ENCODE measurements at regions of chr3 and their contacts with region 1.

Region 1: GRCh38 chr3:71416876-71417275 is 166.7 kb downstream of the FOXP1 start:
- DNase-seq: peak; percentile 75
- ATAC-seq: peak; percentile 73
- H3K4me3 Mint-ChIP-seq: peak overlapping the region; percentile 58
- H3K27ac Mint-ChIP-seq: peak overlapping the region; percentile 80
- H3K4me1 Mint-ChIP-seq: peaks cover 67% of the 10 kb centered on the region
- H3K27me3 Mint-ChIP-seq: no peaks in the 10 kb centered on the region

Region 2: GRCh38 chr3:70824773-70825172 is 592.1 kb before region 1 on chr3:
- CTCF ChIA-PET with region 1: no interaction called
- POLR2A ChIA-PET with region 1: no interaction called
- DNase-seq: no peak
- ATAC-seq: no peak
- H3K4me3 Mint-ChIP-seq: no peak overlapping the region
- H3K27ac Mint-ChIP-seq: no peak overlapping the region
- H3K4me1 Mint-ChIP-seq: no peaks in the 10 kb centered on the region
- H3K27me3 Mint-ChIP-seq: no peaks in the 10 kb centered on the region

Region 3: GRCh38 chr3:71397046-71397445 is 19.8 kb before region 1 on chr3:
- CTCF ChIA-PET with region 1: interaction called, 26 read pairs
- POLR2A ChIA-PET with region 1: interaction called, 3 read pairs
- DNase-seq: no peak
- ATAC-seq: no peak
- H3K4me3 Mint-ChIP-seq: no peak overlapping the region
- H3K27ac Mint-ChIP-seq: no peak overlapping the region
- H3K4me1 Mint-ChIP-seq: peaks cover 50% of the 10 kb centered on the region
- H3K27me3 Mint-ChIP-seq: no peaks in the 10 kb centered on the region

Region 4: DNA sequence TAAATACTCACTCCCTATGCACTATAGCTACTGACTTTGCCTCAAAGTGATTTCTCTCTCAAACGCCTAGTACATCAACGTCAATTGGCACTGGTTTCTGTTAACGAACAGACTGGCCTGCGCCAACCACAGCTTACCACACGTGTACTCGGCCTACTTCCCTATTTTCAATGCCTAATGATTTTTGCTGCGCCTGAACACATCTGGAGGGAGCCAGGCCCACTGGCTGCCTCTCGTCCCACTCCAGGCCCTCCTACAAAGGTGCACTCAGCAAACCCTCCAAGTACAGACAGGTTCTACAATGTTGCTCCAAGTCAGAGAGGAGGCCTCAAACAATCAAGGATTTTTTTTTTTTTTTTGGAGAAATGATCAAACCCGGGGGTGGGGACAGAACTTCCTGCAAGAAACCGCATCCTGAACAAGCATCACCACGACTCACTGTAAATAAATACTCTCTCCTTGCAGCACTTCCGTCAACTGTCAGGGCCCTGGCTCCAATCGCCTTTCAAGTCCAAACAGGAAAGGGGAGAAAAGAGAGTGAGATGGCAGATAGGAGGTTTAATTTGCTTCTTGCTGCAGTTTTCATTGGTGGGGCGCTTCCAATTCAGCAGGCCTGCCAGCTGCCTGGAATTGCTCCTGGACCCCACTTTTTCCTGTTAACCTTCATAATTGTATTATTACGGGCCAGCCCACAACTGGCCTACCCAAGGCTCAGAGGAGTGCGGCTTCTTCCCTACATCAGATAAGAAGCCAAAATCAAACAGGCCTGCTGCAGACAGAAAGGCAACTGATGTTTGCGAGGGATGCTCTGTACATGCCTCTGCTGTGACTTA is 27.4 kb after region 1 on chr3:
- CTCF ChIA-PET with region 1: interaction called, 18 read pairs
- POLR2A ChIA-PET with region 1: interaction called, 10 read pairs
- DNase-seq: peak; percentile 88
- ATAC-seq: peak; percentile 78
- H3K4me3 Mint-ChIP-seq: peak overlapping the region; percentile 76
- H3K27ac Mint-ChIP-seq: peak overlapping the region; percentile 99
- H3K4me1 Mint-ChIP-seq: peaks cover 95% of the 10 kb centered on the region
- H3K27me3 Mint-ChIP-seq: no peaks in the 10 kb centered on the region

Region 5: DNA sequence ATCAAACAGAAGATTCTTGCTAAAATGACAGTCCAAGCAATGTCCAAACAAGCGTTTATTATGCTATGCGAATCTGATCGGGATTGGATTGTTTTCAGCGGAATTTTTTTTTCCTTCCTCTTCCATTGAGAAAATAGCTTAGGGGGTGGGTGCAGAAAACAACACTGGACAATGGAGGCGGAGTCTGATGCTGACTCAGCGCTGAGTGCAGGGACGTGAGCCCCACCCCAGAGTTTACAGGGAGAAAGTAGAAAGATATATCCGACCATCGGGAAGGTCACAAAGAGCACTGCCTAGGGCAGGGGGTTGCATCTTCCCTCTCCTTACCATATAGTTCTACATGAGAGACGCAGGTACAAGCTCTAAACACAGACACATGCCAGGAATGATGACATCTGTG is 49.6 kb after region 1 on chr3:
- CTCF ChIA-PET with region 1: no interaction called
- POLR2A ChIA-PET with region 1: no interaction called
- DNase-seq: no peak
- ATAC-seq: no peak
- H3K4me3 Mint-ChIP-seq: no peak overlapping the region
- H3K27ac Mint-ChIP-seq: no peak overlapping the region
- H3K4me1 Mint-ChIP-seq: peaks cover 26% of the 10 kb centered on the region
- H3K27me3 Mint-ChIP-seq: no peaks in the 10 kb centered on the region

Region 6: GRCh38 chr3:71495708-71496472 is 79.0 kb after region 1 on chr3:
- CTCF ChIA-PET with region 1: interaction called, 11 read pairs
- POLR2A ChIA-PET with region 1: no interaction called
- DNase-seq: peak; percentile 52
- ATAC-seq: peak; percentile 69
- H3K4me3 Mint-ChIP-seq: peak overlapping the region; percentile 66
- H3K27ac Mint-ChIP-seq: peak overlapping the region; percentile 90
- H3K4me1 Mint-ChIP-seq: peaks cover 71% of the 10 kb centered on the region
- H3K27me3 Mint-ChIP-seq: no peaks in the 10 kb centered on the region

Region 7: DNA sequence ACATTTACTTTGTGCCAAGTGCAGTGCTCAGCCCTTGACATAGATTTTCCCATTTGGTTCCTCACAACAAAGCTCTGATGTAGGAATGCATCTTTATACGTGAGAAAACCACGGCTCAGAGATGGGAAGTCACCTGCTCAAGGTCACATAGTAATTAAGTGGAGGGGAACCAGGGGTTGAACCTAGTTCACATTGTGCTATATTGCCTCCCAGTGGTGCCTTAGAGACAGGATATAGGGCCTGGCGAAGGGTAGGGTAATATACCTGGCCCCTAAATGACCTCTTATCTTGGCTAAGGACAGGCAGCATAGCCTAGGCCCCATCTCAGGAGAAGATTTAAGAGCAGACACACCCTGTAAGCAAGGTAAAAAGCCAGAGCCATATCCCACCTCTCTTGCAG is 95.1 kb after region 1 on chr3:
- CTCF ChIA-PET with region 1: interaction called, 17 read pairs
- POLR2A ChIA-PET with region 1: no interaction called
- DNase-seq: peak; percentile 63
- ATAC-seq: peak; percentile 97
- H3K4me3 Mint-ChIP-seq: no peak overlapping the region
- H3K27ac Mint-ChIP-seq: no peak overlapping the region
- H3K4me1 Mint-ChIP-seq: peaks cover 18% of the 10 kb centered on the region
- H3K27me3 Mint-ChIP-seq: no peaks in the 10 kb centered on the region

Region 8: DNA sequence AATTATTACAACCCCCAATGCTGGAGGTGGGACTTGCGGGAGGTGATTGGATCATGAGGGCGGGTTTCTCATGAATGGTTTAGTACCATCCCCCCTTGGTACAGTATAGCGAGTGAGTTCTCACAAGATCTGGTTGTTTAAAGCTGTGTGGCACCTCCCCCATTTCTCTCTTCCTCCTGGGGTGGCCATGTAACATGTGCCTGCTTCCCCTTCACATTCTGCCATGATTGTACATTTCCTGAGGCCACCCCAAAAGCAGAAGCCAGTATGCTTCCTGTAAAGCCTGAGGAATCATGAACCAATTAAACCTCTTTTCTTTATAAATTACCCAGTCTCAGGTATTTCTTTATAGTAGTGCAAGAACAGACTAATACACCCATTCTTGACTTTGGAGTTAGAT is 388.3 kb after region 1 on chr3:
- CTCF ChIA-PET with region 1: no interaction called
- POLR2A ChIA-PET with region 1: no interaction called
- DNase-seq: no peak
- ATAC-seq: no peak
- H3K4me3 Mint-ChIP-seq: no peak overlapping the region
- H3K27ac Mint-ChIP-seq: no peak overlapping the region
- H3K4me1 Mint-ChIP-seq: no peaks in the 10 kb centered on the region
- H3K27me3 Mint-ChIP-seq: peaks cover 5% of the 10 kb centered on the region